Mammary epithelial cell (primary cell): ENCODE measurements at regions of chr7 and their contacts with region 1.

Region 1: GRCh38 chr7:105769901-105770628 is 106.3 kb downstream of the ATXN7L1 start:
- DNase-seq: no peak
- H3K4me3 ChIP-seq: no peak overlapping the region
- H3K27ac ChIP-seq: no peak overlapping the region
- H3K4me1 ChIP-seq: no peaks in the 10 kb centered on the region
- H3K27me3 ChIP-seq: no peaks in the 10 kb centered on the region
- CTCF ChIP-seq: no peak

Region 2: GRCh38 chr7:105713488-105714465 is 56.3 kb before region 1 on chr7:
- CTCF ChIA-PET with region 1: no interaction called
- dilution Hi-C with region 1: no loop called
- in situ Hi-C with region 1: no loop called
- intact Hi-C with region 1: no loop called
- DNase-seq: peak; percentile 29
- H3K4me3 ChIP-seq: no peak overlapping the region
- H3K27ac ChIP-seq: no peak overlapping the region
- H3K4me1 ChIP-seq: peaks cover 10% of the 10 kb centered on the region
- H3K27me3 ChIP-seq: no peaks in the 10 kb centered on the region
- CTCF ChIP-seq: no peak

Region 3: DNA sequence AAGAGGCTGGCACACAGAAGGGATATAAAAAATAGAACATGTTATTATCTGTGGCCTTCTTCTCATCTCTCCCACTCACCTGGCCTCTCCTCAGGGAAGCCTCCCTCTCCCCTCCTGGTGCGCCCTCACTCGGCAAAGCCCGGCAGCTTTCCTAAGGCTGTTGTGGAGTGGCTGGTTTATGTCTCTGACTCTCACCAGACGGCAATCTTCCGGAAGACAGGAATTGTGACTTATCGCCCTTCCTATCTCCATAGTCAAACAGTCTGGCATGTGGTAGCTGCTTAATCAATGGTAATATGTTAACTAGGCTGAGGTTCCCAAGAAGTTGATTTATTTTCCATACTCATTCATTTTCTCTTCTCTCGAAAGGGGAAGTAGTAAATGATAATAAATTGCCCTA is 27.6 kb after region 1 on chr7:
- CTCF ChIA-PET with region 1: interaction called, 14 read pairs
- dilution Hi-C with region 1: no loop called
- in situ Hi-C with region 1: no loop called
- intact Hi-C with region 1: no loop called
- DNase-seq: no peak
- H3K4me3 ChIP-seq: no peak overlapping the region
- H3K27ac ChIP-seq: no peak overlapping the region
- H3K4me1 ChIP-seq: peaks cover 21% of the 10 kb centered on the region
- H3K27me3 ChIP-seq: no peaks in the 10 kb centered on the region
- CTCF ChIP-seq: no peak